ENCODE measurements at regions of chr6 and their contacts with region 1.

Region 1: DNA sequence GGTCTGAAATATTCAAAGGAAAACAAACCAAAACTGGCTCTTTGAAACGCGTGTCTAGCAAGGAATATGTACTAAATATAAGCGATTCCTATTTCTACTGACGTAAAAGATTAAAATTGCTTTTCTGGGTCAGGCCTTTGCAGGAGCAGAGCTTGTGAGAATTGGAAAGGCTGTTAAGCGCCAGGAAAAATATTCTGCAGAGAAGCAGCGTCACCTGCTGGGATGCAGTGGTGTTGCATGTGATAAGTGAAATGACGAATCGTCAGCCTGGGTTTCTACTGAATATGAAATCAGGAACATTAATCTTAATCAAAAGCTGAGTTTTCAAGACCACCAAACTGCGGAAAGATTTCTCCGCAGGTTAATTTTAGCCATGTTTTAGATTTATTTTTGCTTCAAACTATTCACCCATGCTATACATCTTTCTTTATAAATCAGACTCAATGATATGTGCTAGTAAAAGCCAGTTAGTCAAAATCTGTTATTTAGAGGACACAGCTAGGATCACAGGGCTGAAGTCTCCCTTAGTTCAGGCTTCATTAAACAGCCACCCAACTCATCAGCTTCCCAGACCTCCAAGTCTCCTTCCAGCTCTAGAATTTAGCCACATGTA is 67.4 kb downstream of the ALDH8A1 start:
- DNase-seq: peak; percentile 71
- H3K4me3 Mint-ChIP-seq: no peak overlapping the region
- H3K27ac Mint-ChIP-seq: no peak overlapping the region
- H3K4me1 Mint-ChIP-seq: no peaks in the 10 kb centered on the region
- H3K27me3 Mint-ChIP-seq: peaks cover 13% of the 10 kb centered on the region

Region 2: GRCh38 chr6:134152767-134153485 is 729.6 kb before region 1 on chr6:
- CTCF ChIA-PET with region 1: interaction called, 35 read pairs
- DNase-seq: no peak
- H3K4me3 Mint-ChIP-seq: no peak overlapping the region
- H3K27ac Mint-ChIP-seq: no peak overlapping the region
- H3K4me1 Mint-ChIP-seq: no peaks in the 10 kb centered on the region
- H3K27me3 Mint-ChIP-seq: no peaks in the 10 kb centered on the region

Region 3: DNA sequence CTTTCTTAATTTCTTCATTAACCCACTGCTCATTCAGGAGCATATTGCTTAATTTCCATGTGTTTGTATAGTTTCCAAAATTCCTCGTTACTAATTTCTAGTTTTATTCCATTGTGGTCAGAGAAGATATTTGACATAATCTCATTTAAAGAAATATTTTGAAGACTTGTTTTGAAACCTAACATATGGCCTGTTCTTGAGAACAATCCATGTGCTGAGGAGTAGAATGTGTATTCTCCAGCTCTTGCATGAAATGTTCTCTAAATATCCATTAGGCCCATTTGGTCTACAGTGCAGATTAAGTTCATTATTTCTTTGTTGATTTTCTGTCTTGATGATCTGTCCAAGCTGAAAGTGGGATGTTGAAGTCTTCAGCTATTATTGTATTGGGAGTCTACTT is 184.3 kb before region 1 on chr6:
- CTCF ChIA-PET with region 1: no interaction called
- DNase-seq: no peak
- H3K4me3 Mint-ChIP-seq: no peak overlapping the region
- H3K27ac Mint-ChIP-seq: no peak overlapping the region
- H3K4me1 Mint-ChIP-seq: no peaks in the 10 kb centered on the region
- H3K27me3 Mint-ChIP-seq: peaks cover 18% of the 10 kb centered on the region

Region 4: GRCh38 chr6:134870677-134871498 is 11.6 kb before region 1 on chr6:
- CTCF ChIA-PET with region 1: interaction called, 10 read pairs
- DNase-seq: no peak
- H3K4me3 Mint-ChIP-seq: no peak overlapping the region
- H3K27ac Mint-ChIP-seq: no peak overlapping the region
- H3K4me1 Mint-ChIP-seq: peaks cover 25% of the 10 kb centered on the region
- H3K27me3 Mint-ChIP-seq: no peaks in the 10 kb centered on the region

Region 5: DNA sequence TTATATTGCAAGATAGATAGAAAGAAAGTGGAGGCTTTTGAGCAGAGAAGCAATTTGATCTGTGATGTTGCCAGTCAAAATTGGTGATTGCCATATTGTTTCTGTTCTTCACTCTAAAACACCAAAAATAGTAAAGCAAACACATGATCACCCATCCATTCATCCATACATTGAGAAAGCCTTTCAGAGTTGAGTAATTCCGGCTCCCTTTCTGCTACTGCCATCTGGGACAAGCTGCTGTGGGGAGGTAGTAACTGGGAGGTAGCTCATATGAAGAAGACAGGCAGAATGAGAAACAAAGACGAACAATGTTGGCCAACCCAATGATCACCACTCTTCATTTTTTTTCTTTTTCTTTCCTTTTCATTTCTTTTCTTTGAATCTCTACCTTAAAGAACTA is 223.2 kb after region 1 on chr6:
- CTCF ChIA-PET with region 1: no interaction called
- DNase-seq: no peak
- H3K4me3 Mint-ChIP-seq: no peak overlapping the region
- H3K27ac Mint-ChIP-seq: no peak overlapping the region
- H3K4me1 Mint-ChIP-seq: peaks cover 46% of the 10 kb centered on the region
- H3K27me3 Mint-ChIP-seq: no peaks in the 10 kb centered on the region

Region 6: DNA sequence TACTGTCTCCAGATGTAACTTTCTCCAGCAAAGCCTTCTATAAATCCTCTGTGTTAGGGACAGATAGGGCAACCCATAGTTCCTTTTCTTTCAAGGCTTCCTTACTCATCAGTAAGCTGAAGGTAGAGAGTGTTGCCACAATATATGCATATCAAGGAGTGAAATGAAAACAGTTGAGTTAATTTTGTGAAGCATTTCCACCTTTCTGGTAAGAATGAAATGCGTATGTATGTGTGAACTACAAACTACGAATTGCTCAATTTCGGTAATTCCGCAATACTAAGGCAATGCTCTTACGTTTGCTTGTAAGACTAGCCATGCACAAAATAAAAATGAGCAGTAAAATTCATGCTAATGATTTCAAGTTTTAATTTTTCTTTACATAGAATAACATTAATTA is 233.3 kb after region 1 on chr6:
- CTCF ChIA-PET with region 1: no interaction called
- DNase-seq: no peak
- H3K4me3 Mint-ChIP-seq: no peak overlapping the region
- H3K27ac Mint-ChIP-seq: peak overlapping the region; percentile 82
- H3K4me1 Mint-ChIP-seq: peaks cover 66% of the 10 kb centered on the region
- H3K27me3 Mint-ChIP-seq: no peaks in the 10 kb centered on the region